CD4-positive, alpha-beta T cell (primary cell): ENCODE measurements at regions of chr4 and their contacts with region 1.

Region 1: DNA sequence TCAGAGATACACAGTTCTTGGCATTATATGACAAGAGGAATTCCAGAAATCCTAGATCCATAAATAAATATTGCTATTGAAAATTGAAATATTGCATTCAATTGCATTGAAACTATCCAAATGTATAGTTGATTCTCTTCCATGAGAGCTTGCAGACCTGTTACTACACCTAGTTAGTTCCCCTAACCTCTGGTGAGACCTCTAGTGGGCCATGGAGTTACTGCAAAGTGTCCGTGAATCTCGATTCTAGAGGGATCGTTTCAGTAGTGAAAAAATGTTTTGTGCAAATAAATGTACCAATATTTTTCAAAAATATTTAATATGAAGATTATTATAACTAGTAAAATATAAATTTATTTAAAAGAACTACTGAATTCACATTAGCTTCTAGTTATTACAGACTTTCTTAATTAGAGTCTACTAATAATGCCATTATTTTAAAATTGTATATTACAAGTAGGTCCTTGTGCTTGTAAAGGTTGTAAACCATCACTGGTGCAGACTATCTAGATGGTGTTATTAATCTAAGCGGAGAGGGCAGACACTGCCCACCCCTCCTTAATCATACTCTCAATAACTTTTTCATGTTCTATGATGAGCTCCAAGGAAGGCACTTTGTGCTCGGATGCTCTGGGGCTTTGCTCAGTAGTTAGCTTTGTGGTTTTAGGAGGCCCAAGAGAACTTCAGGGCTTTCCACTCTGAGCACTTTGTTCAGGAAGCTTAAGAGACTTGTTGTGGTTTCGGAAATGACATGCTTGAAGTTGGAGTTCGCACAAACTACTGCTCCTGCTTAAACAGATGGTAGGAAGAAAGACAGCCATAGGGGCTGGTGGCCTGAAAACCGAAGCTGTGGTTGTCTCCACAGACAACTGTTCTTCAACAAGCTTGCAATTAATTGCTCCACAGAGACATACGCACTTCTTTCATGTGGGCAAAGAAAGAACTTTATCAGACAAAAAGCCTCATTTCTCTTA is 42.8 kb downstream of the IL21 start:
- DNase-seq: peak; percentile 35 to 93 (median 58)
- ATAC-seq: peak; percentile 82
- H3K4me3 ChIP-seq: peak overlapping the region; percentile 19
- H3K4me3 Mint-ChIP-seq: peak overlapping the region; percentile 57
- H3K27ac ChIP-seq: peak overlapping the region; percentile 67 to 73
- H3K27ac Mint-ChIP-seq: peak overlapping the region; percentile 90
- H3K4me1 ChIP-seq: peaks cover 23% of the 10 kb centered on the region
- H3K4me1 Mint-ChIP-seq: peaks cover 44% of the 10 kb centered on the region
- H3K27me3 ChIP-seq: no peaks in the 10 kb centered on the region
- H3K27me3 Mint-ChIP-seq: no peaks in the 10 kb centered on the region
- CTCF ChIP-seq: peak; percentile 82

Region 2: GRCh38 chr4:121950212-121950679 is 627.8 kb before region 1 on chr4:
- CTCF ChIA-PET with region 1: no interaction called
- POLR2A ChIA-PET with region 1: no interaction called
- intact Hi-C with region 1: loop called (anchors 2 to 5 kb)
- DNase-seq: peak; percentile 67 to 89 (median 80)
- ATAC-seq: peak; percentile 80
- H3K4me3 ChIP-seq: peak overlapping the region; percentile 73
- H3K4me3 Mint-ChIP-seq: peak overlapping the region; percentile 84
- H3K27ac ChIP-seq: no peak overlapping the region
- H3K27ac Mint-ChIP-seq: no peak overlapping the region
- H3K4me1 ChIP-seq: peaks cover 16% of the 10 kb centered on the region
- H3K4me1 Mint-ChIP-seq: peaks cover 9% of the 10 kb centered on the region
- H3K27me3 ChIP-seq: peaks cover 10 to 28% of the 10 kb centered on the region in 2 experiments
- H3K27me3 Mint-ChIP-seq: peaks cover 62% of the 10 kb centered on the region
- CTCF ChIP-seq: peak; percentile 81

Region 3: GRCh38 chr4:122151982-122152710 is 425.9 kb before region 1 on chr4 and contains the start of gene BLTP1:
- CTCF ChIA-PET with region 1: no interaction called
- POLR2A ChIA-PET with region 1: no interaction called
- intact Hi-C with region 1: loop called in 1 of 2 experiments (anchors 5 kb)
- DNase-seq: peak; percentile 73 to 94 (median 84)
- ATAC-seq: peak; percentile 88
- H3K4me3 ChIP-seq: peak within 1 kb of the TSS; percentile 93
- H3K4me3 Mint-ChIP-seq: peak within 1 kb of the TSS; percentile 94
- H3K27ac ChIP-seq: peak within 1 kb of the TSS; percentile 81 to 89
- H3K27ac Mint-ChIP-seq: peak within 1 kb of the TSS; percentile 94
- H3K4me1 ChIP-seq: peaks cover 11% of the 10 kb centered on the region
- H3K4me1 Mint-ChIP-seq: peaks cover 77% of the 10 kb centered on the region
- H3K27me3 ChIP-seq: no peaks in the 10 kb centered on the region
- H3K27me3 Mint-ChIP-seq: no peaks in the 10 kb centered on the region
- CTCF ChIP-seq: no peak
- total RNA-seq, gene BLTP1: 86.9 to 93.6 TPM

Region 4: DNA sequence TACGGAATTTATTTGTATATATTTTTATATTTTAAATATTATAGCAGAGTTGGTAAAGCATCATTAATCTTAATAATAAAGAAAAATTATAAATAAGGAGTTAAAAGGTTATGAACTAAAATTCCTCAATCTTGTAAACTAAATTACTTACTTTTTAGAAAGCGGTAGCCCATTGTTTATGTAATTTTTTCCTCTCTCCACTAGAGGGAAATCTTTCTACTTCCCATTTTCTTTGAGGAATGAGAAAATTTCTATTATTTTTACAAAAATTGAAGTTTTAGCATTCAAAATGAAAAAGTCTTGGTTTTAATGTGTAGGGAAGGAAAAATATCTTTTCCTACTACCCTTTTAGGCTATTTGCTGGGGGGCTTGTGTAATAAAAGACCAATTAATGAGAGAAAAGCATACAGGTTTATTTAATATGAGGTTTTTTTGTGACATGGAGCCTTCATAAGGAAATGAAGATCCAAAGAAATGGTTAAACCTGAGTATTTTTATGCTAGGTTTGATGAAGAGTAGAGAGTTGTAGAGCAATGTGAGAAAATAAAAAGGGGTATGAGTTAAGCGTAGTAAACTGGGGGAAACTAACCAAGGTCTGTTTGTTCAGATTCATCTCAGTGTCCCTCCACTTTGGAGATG is 268.0 kb before region 1 on chr4:
- CTCF ChIA-PET with region 1: no interaction called
- POLR2A ChIA-PET with region 1: no interaction called
- intact Hi-C with region 1: loop called in 1 of 2 experiments (anchors 2 kb)
- DNase-seq: peak in 2 of 14 experiments; percentile 16 to 35
- ATAC-seq: no peak
- H3K4me3 ChIP-seq: no peak overlapping the region
- H3K4me3 Mint-ChIP-seq: no peak overlapping the region
- H3K27ac ChIP-seq: no peak overlapping the region
- H3K27ac Mint-ChIP-seq: no peak overlapping the region
- H3K4me1 ChIP-seq: no peaks in the 10 kb centered on the region
- H3K4me1 Mint-ChIP-seq: no peaks in the 10 kb centered on the region
- H3K27me3 ChIP-seq: no peaks in the 10 kb centered on the region
- H3K27me3 Mint-ChIP-seq: no peaks in the 10 kb centered on the region
- CTCF ChIP-seq: peak; percentile 59

Region 5: GRCh38 chr4:122458625-122459024 is 119.5 kb before region 1 on chr4:
- CTCF ChIA-PET with region 1: interaction called, 5 read pairs
- POLR2A ChIA-PET with region 1: interaction called, 15 read pairs
- intact Hi-C with region 1: loop called in 1 of 2 experiments (anchors 2 kb)
- DNase-seq: peak in 10 of 14 experiments; percentile 3 to 78 (median 14)
- ATAC-seq: peak; percentile 73
- H3K4me3 ChIP-seq: peak overlapping the region; percentile 41
- H3K4me3 Mint-ChIP-seq: peak overlapping the region; percentile 90
- H3K27ac ChIP-seq: peak overlapping the region in 1 of 2 donors; percentile 6
- H3K27ac Mint-ChIP-seq: peak overlapping the region; percentile 69
- H3K4me1 ChIP-seq: peaks cover 2% of the 10 kb centered on the region
- H3K4me1 Mint-ChIP-seq: peaks cover 52% of the 10 kb centered on the region
- H3K27me3 ChIP-seq: no peaks in the 10 kb centered on the region
- H3K27me3 Mint-ChIP-seq: no peaks in the 10 kb centered on the region
- CTCF ChIP-seq: no peak

Region 6: DNA sequence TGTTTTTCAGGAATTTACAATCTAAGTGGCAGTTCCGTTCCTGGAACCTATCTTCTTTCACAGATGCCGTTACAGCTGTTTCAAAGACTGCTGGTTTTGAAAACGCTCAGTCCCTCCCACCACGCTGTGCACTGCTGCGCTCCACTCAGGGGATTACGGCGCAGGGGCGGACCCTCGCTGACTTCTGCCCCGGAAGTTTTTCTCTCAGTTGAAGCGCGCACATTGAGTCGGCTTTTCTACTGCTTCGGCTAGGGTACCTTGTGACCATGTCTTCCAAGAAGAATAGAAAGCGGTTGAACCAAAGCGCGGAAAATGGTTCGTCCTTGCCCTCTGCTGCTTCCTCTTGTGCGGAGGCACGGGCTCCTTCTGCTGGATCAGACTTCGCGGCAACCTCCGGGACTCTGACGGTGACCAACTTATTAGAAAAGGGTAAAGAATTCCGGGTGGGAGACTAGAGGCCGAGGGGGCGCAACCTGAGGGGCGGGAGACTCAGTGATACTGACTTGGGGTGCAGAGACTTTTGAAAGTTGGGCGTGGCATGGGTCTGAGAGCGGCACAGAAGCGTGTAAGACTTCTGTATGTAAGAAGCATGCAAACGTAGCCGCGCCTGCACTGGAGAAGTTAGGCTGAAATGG is 344.9 kb after region 1 on chr4:
- CTCF ChIA-PET with region 1: interaction called, 3 read pairs
- POLR2A ChIA-PET with region 1: no interaction called
- intact Hi-C with region 1: loop called in 1 of 2 experiments (anchors 10 kb)
- DNase-seq: peak; percentile 68 to 93 (median 84)
- ATAC-seq: peak; percentile 98
- H3K4me3 ChIP-seq: peak overlapping the region; percentile 69
- H3K4me3 Mint-ChIP-seq: peak overlapping the region; percentile 98
- H3K27ac ChIP-seq: peak overlapping the region; percentile 57 to 62
- H3K27ac Mint-ChIP-seq: no peak overlapping the region
- H3K4me1 ChIP-seq: peaks cover 9% of the 10 kb centered on the region
- H3K4me1 Mint-ChIP-seq: peaks cover 8% of the 10 kb centered on the region
- H3K27me3 ChIP-seq: no peaks in the 10 kb centered on the region
- H3K27me3 Mint-ChIP-seq: no peaks in the 10 kb centered on the region
- CTCF ChIP-seq: no peak